ENCODE measurements at regions of chr18 and their contacts with region 1.

Region 1: DNA sequence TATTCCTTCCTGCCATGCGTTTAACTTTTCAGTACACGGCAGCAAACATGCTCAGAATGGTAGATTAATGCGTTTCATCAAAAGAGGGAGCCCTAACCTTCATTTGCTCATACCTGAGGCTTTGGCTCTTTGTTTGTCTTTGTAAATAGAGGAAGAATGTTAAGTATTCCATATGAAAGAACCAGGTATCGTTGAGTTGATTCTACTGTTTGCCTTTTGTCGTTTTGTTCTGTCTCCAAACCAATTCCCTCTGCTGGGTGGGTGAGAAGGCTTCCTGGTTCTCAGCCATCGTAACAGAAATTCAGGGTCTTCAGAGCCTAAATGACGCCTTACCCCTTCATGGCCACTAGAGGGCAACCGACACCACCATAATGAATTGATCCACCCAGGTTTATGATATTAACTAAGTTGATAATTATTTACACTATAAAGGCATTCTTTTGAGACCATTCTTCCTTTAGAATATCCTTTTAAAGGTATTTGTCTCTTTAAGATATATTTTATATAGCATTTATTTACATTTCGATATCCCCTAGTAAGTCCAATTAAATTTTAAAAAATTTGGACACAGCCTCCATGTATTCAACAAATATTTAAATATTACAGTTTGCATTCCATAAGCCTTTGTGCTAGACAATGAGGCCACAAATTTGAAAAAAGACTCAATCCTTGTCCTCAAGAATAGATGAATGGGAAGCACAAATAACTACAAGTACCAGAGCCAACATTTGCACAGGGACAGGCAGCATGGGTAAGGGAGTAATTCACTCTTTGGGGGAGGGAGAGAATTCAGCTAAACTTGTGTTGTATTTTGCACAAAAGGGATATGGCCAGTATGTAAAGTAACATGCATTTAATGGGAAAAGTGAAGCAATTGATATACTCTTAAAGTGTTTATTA is 48.1 kb downstream of the TIMM21 start:
- DNase-seq: peak in 2 of 5 donors; percentile 20 to 30
- ATAC-seq: peak in 3 of 4 donors; percentile 64 to 87 (median 65)
- H3K4me3 ChIP-seq: peak overlapping the region in 7 of 12 donors; percentile 1 to 35 (median 25)
- H3K27ac ChIP-seq: no peak overlapping the region
- H3K4me1 ChIP-seq: peaks cover 0 to 12% (median 0%) of the 10 kb centered on the region in 12 donors
- H3K27me3 ChIP-seq: peaks cover 0 to 15% (median 0%) of the 10 kb centered on the region in 9 donors
- CTCF ChIP-seq: peak; percentile 87 to 95 (median 90)
- POLR2A ChIP-seq: no peak

Region 2: GRCh38 chr18:74139888-74140287 is 56.6 kb before region 1 on chr18:
- intact Hi-C with region 1: no loop called
- DNase-seq: no peak
- ATAC-seq: no peak
- H3K4me3 ChIP-seq: no peak overlapping the region
- H3K27ac ChIP-seq: no peak overlapping the region
- H3K4me1 ChIP-seq: no peaks in the 10 kb centered on the region
- H3K27me3 ChIP-seq: peaks cover 0 to 3% (median 0%) of the 10 kb centered on the region in 9 donors
- CTCF ChIP-seq: no peak
- POLR2A ChIP-seq: no peak

Region 3: GRCh38 chr18:74342416-74343043 is 146.1 kb after region 1 on chr18:
- intact Hi-C with region 1: loop called (anchors 1 to 5 kb)
- DNase-seq: peak in 1 of 5 donors; percentile 32
- ATAC-seq: no peak
- H3K4me3 ChIP-seq: no peak overlapping the region
- H3K27ac ChIP-seq: no peak overlapping the region
- H3K4me1 ChIP-seq: no peaks in the 10 kb centered on the region
- H3K27me3 ChIP-seq: peaks cover 0 to 2% (median 0%) of the 10 kb centered on the region in 9 donors
- CTCF ChIP-seq: peak; percentile 66 to 88 (median 77)
- POLR2A ChIP-seq: no peak

Region 4: GRCh38 chr18:74476140-74476539 is 279.7 kb after region 1 on chr18:
- intact Hi-C with region 1: loop called in 6 of 10 experiments (anchors 5 to 10 kb)
- DNase-seq: peak in 3 of 5 donors; percentile 47 to 57 (median 57)
- ATAC-seq: peak in 3 of 4 donors; percentile 41 to 67 (median 64)
- H3K4me3 ChIP-seq: no peak overlapping the region
- H3K27ac ChIP-seq: no peak overlapping the region
- H3K4me1 ChIP-seq: peaks cover 0 to 27% (median 0%) of the 10 kb centered on the region in 12 donors
- H3K27me3 ChIP-seq: no peaks in the 10 kb centered on the region
- CTCF ChIP-seq: peak; percentile 58 to 86 (median 78)
- POLR2A ChIP-seq: no peak

Region 5: GRCh38 chr18:74489676-74490075 is 293.2 kb after region 1 on chr18:
- intact Hi-C with region 1: loop called in 3 of 10 experiments (anchors 5 to 10 kb)
- DNase-seq: no peak
- ATAC-seq: no peak
- H3K4me3 ChIP-seq: peak overlapping the region in 1 of 12 donors; percentile 13
- H3K27ac ChIP-seq: no peak overlapping the region
- H3K4me1 ChIP-seq: peaks cover 0 to 19% (median 7%) of the 10 kb centered on the region in 12 donors
- H3K27me3 ChIP-seq: no peaks in the 10 kb centered on the region
- CTCF ChIP-seq: no peak
- POLR2A ChIP-seq: no peak

Region 6: GRCh38 chr18:74551936-74552555 is 355.6 kb after region 1 on chr18:
- intact Hi-C with region 1: loop called in 9 of 10 experiments (anchors 2 to 10 kb)
- DNase-seq: peak; percentile 79 to 88 (median 84)
- ATAC-seq: peak; percentile 77 to 98 (median 92)
- H3K4me3 ChIP-seq: no peak overlapping the region
- H3K27ac ChIP-seq: no peak overlapping the region
- H3K4me1 ChIP-seq: peaks cover 0 to 17% (median 8%) of the 10 kb centered on the region in 12 donors
- H3K27me3 ChIP-seq: no peaks in the 10 kb centered on the region
- CTCF ChIP-seq: peak; percentile 74 to 94 (median 84)
- POLR2A ChIP-seq: no peak

Region 7: DNA sequence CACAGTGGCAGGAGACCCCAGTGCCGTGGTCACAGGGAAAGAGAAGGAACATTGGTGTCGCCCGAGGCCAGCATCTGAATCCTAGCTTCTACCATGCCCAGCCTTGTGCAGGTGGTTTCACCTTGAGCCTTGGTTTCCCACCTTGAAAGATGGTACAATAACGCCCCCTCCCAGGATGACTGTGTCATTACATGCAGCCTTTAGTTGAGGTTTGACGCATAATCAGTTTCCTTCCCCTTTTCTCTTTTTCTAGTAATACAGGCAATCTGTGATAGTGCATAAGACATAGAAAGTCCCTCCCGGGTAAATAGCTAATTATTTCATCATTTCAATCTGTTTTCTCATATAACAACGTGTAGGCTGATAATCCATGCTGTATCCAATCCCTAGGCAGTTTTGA is 371.4 kb after region 1 on chr18:
- intact Hi-C with region 1: no loop called
- DNase-seq: no peak
- ATAC-seq: no peak
- H3K4me3 ChIP-seq: no peak overlapping the region
- H3K27ac ChIP-seq: no peak overlapping the region
- H3K4me1 ChIP-seq: peaks cover 0 to 8% (median 0%) of the 10 kb centered on the region in 12 donors
- H3K27me3 ChIP-seq: no peaks in the 10 kb centered on the region
- CTCF ChIP-seq: peak in 1 of 12 donors; percentile 8
- POLR2A ChIP-seq: no peak

Measured in heart left ventricle (tissue), 16 donors.